A549 (cell line): ENCODE measurements at regions of chr1 and their contacts with region 1.

Region 1: DNA sequence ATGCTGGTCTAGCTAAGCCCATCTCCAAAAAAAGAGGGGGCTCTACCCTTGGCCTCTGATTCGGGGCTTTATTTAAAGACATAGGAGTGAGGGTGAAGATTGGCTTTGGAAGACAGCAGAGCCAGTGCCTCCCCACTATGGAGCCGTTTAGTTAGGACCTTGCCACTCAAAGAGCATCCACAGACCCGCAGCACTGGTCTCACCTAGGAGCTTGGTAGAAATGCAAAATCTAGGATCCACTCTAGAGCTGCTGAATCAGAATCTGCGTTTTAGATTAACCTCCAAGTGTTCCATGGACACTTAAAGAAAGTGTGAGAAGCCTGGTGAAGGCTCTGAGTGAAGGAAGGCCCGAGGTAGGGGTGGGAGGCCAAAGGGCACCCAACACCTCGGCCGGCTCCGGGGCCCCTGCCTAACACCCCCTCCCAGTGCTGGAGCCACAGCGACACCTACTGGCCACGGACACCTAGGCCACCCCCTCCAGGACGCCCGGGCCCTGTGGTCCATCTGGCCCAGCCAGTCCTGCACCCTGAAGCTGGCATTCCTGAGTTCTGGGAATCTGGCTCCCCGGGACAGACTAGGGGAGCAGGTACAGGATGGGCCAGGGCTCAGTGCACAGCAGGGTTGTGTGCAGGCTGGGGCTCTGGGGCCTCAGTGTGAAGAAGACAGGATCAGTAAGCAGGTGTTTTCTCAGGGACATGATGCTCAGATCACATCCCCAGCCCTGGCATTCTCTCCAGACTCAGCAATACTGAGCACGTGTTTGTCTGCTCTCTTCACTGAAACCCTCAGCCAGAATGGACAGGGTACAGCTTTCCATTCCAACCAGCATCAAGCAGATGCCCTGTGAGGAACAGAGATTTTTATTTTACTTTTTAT is 79.2 kb downstream of the TMEM53 start:
- DNase-seq: peak; percentile 47 to 90
- ATAC-seq: peak; percentile 97 to 99
- H3K4me3 ChIP-seq: no peak overlapping the region
- H3K27ac ChIP-seq: no peak overlapping the region
- H3K4me1 ChIP-seq: no peaks in the 10 kb centered on the region
- CTCF ChIP-seq: peak; percentile 77
- EP300 ChIP-seq: no peak
- POLR2A ChIP-seq: no peak
- RAD21 ChIP-seq: peak; percentile 91 to 93

Region 2: DNA sequence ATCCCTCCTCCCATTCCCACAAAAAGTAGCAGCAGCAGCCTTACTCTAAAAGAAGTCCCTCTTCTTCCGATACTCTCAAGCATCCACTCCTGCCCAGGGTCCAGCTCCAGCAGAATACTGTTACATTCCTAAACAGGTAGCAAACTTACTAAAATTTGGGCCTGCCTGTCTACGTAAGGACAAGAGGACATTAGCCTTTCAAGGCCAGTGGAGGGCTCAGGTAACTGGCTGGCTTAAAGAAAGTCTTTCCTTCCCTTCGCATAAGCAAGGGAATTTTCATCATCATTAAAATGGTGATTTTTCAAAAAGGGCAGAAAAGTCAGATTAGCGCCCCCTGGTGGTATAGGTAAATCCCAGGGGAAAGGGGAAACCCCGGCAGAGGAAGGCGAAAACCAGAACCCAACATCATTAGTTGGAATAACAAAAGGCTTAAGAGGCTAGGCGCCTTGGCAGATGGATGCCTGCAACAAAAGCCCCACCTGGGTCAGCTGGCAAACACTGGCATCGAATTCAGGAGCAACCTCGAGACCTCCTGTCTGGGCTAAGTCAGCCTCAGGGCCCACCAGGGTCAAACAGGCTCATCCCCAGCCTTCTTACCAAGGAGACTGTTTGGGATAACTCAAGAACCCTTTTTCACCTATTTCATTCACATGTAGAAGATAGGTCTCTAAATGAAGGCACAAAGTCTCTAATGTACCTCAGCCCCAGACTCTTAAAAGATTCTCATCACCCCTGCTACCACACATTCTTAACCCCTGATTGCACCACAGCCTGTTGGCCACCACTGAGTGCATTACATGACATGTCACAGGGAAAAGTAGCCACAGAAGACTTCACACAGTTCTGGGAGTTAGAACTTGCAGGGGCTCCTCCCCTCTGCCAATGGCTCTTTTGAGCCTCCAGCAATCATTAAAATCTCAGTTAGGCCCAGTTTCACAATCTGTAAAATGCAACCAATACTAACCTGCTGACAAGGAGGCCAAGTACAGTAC is 276.7 kb before region 1 on chr1:
- CTCF ChIA-PET with region 1: interaction called, 10 read pairs
- POLR2A ChIA-PET with region 1: no interaction called
- DNase-seq: peak; percentile 23 to 61
- ATAC-seq: peak in 1 of 2 experiments; percentile 68; a peak in 3 of 6 replicates
- H3K4me3 ChIP-seq: no peak overlapping the region
- H3K27ac ChIP-seq: no peak overlapping the region
- H3K4me1 ChIP-seq: no peaks in the 10 kb centered on the region
- CTCF ChIP-seq: peak; percentile 73
- EP300 ChIP-seq: no peak
- POLR2A ChIP-seq: no peak
- RAD21 ChIP-seq: peak; percentile 48 to 54; a peak in 3 of 5 replicates

Region 3: GRCh38 chr1:44377925-44378784 is 217.0 kb before region 1 on chr1:
- CTCF ChIA-PET with region 1: interaction called, 35 read pairs
- POLR2A ChIA-PET with region 1: no interaction called
- DNase-seq: peak; percentile 35 to 46
- ATAC-seq: peak; percentile 59 to 80; a peak in 5 of 6 replicates
- H3K4me3 ChIP-seq: no peak overlapping the region
- H3K27ac ChIP-seq: no peak overlapping the region
- H3K4me1 ChIP-seq: no peaks in the 10 kb centered on the region
- CTCF ChIP-seq: peak; percentile 56
- EP300 ChIP-seq: no peak
- POLR2A ChIP-seq: no peak
- RAD21 ChIP-seq: peak; percentile 64 to 80

Region 4: GRCh38 chr1:44553771-44554170 is 41.3 kb before region 1 on chr1:
- CTCF ChIA-PET with region 1: interaction called, 10 read pairs
- POLR2A ChIA-PET with region 1: no interaction called
- DNase-seq: peak; percentile 39 to 59
- ATAC-seq: peak; percentile 93 to 96
- H3K4me3 ChIP-seq: no peak overlapping the region
- H3K27ac ChIP-seq: peak overlapping the region; percentile 50 to 63; a peak in 4 of 6 replicates
- H3K4me1 ChIP-seq: peaks cover 28% of the 10 kb centered on the region
- CTCF ChIP-seq: no peak
- EP300 ChIP-seq: no peak
- POLR2A ChIP-seq: no peak
- RAD21 ChIP-seq: no peak

Region 5: DNA sequence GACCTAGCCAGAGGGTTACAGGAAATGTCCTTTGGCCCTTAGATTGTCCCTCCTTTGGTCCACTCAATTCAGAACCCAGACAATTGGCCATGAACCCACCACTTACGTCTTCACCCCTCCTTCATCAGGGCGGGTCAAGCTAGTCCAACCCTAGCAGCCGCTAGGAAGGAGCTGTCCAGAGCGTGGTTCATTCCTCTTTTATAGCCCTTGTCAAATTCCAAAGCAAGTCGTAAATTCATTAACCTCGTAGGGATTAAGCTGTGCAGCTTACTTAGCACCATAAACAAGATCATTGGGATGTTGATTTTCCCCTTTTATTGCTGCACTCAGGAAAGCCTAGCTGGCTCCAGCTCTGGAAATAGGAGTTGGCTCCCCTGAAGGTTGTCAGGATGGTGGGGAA is 10.9 kb before region 1 on chr1:
- CTCF ChIA-PET with region 1: interaction called, 26 read pairs
- POLR2A ChIA-PET with region 1: no interaction called
- DNase-seq: no peak
- ATAC-seq: no peak
- H3K4me3 ChIP-seq: no peak overlapping the region
- H3K27ac ChIP-seq: no peak overlapping the region
- H3K4me1 ChIP-seq: no peaks in the 10 kb centered on the region
- CTCF ChIP-seq: no peak
- EP300 ChIP-seq: no peak
- POLR2A ChIP-seq: no peak
- RAD21 ChIP-seq: no peak

Region 6: DNA sequence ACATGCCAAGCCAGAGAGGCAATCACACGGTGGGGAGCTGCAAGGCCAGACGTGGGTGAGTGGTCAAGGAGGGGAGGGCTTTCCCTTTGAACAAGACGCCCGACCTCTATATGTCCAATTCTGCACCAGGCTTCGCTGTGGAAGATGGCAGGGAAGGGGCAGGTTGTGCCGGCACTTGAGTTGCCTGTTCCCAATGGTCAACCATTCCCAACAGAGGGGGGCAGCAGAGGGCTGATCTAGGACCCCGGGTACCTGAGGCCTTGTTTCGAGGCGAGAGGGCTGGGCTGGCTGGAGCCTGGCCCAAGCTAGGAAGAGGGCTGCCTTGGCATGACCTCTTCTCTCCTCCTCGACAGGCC is 14.3 kb after region 1 on chr1:
- CTCF ChIA-PET with region 1: interaction called, 16 read pairs
- POLR2A ChIA-PET with region 1: no interaction called
- DNase-seq: peak in 1 of 2 experiments; percentile 30
- ATAC-seq: peak; percentile 55 to 86; a peak in 3 of 6 replicates
- H3K4me3 ChIP-seq: no peak overlapping the region
- H3K27ac ChIP-seq: no peak overlapping the region
- H3K4me1 ChIP-seq: no peaks in the 10 kb centered on the region
- CTCF ChIP-seq: peak; percentile 26; the same call in 1 of the 3 replicates
- EP300 ChIP-seq: no peak
- POLR2A ChIP-seq: no peak
- RAD21 ChIP-seq: peak in 1 of 2 experiments; percentile 45; a peak in 2 of 5 replicates

Region 7: DNA sequence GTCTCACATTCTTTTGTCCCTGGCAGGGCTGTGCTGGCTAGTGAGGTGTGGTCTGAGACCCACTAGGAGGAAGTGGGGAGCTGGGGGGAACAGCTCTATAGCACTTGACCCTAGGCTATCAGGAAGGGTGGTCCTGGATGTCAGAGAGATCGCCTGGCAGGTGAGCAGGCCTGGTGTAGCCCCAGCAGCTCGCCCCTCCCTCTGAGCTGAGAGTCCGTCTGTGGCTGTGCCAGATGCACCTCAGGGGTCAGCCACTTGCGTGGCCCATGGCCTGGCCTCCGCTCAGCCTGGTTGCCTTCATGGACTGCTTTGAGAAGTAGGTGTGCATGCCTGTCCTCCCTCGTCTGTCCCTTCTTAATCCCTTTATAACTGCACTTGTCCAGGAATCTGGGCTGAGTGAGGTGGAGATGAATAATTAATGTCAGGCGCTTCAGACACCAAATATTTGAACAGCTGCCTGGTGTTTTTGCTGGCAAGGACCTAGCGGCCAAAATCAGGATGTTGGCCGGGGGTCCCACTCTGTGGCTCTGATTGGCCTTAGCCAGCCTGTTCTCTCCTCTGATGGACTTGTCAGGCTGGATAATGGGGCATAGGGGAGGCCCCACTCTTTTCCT is 48.7 kb after region 1 on chr1:
- CTCF ChIA-PET with region 1: no interaction called
- POLR2A ChIA-PET with region 1: no interaction called
- DNase-seq: no peak
- ATAC-seq: no peak
- H3K4me3 ChIP-seq: no peak overlapping the region
- H3K27ac ChIP-seq: no peak overlapping the region
- H3K4me1 ChIP-seq: no peaks in the 10 kb centered on the region
- CTCF ChIP-seq: no peak
- EP300 ChIP-seq: no peak
- POLR2A ChIP-seq: no peak
- RAD21 ChIP-seq: no peak